ENCODE measurements at regions of chr16 and their contacts with region 1.

Region 1: DNA sequence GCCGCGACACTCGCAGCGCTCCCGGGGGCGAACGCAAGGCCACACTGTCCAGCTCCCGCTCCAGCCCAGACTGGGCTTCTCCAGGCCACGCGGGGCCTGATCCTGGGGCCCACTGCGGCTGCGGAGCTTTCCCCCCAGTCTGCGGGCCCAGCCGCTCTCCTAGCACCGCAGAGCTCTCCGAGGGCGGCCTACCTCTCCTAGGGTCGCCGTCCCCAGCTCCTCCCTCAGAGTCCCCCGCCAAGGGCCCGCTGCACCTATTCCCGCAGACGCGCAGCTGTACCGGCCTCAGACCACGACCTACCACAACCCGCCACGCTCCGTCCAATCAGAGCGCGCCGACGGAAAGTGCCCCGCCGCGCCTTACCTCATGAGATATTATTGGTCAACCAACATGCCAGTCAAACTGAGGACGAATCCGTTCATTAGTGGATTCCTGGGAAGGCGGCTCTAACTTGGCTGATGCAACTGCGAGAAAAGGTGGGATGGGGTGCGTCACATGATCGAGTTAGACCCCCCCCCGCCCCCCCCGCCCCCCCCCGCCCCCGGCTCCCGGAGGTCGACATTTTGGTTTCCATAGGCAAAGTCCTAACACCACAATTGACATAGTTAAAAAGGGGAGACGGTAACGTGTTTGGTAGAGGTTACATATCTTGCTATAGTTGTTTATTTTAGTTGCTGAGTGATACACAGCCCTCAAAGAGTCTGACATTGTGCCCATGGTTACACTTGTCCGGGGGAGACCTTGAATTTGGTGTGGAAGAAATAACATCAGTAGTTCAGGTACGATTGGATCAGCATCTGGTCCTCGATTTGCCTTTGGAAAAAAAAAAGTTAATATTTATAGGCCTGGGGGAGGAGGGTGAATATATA is at the start of gene AARS1:
- DNase-seq: peak; percentile 100
- ATAC-seq: peak; percentile 99
- H3K4me3 ChIP-seq: peak within 1 kb of the TSS; percentile 90 to 100 (median 94)
- H3K27ac ChIP-seq: peak within 1 kb of the TSS; percentile 99
- H3K4me1 ChIP-seq: peaks cover 28% of the 10 kb centered on the region
- H3K27me3 ChIP-seq: no peaks in the 10 kb centered on the region; a peak in 1 of 5 replicates
- CTCF ChIP-seq: peak; percentile 16; the same call in 1 of the 2 replicates
- EP300 ChIP-seq: peak; percentile 50 to 63; a peak in 2 of 4 replicates
- POLR2A ChIP-seq: peak; percentile 98
- RAD21 ChIP-seq: peak; percentile 79
- total RNA-seq, gene AARS1: 107 and 132 TPM in 2 replicates

Region 2: GRCh38 chr16:70151941-70152509 is 137.4 kb before region 1 on chr16:
- CTCF ChIA-PET with region 1: no interaction called
- POLR2A ChIA-PET with region 1: interaction called, 13 read pairs
- in situ Hi-C with region 1: no loop called
- intact Hi-C with region 1: no loop called
- DNase-seq: no peak
- ATAC-seq: peak; percentile 5; the same call in 1 of the 3 replicates
- H3K4me3 ChIP-seq: peak overlapping the region in 1 of 3 experiments; percentile 57; a peak in 1 of 6 replicates
- H3K27ac ChIP-seq: peak overlapping the region; percentile 84
- H3K4me1 ChIP-seq: peaks cover 37% of the 10 kb centered on the region
- H3K27me3 ChIP-seq: no peaks in the 10 kb centered on the region
- CTCF ChIP-seq: no peak
- EP300 ChIP-seq: no peak
- POLR2A ChIP-seq: no peak
- RAD21 ChIP-seq: no peak

Region 3: DNA sequence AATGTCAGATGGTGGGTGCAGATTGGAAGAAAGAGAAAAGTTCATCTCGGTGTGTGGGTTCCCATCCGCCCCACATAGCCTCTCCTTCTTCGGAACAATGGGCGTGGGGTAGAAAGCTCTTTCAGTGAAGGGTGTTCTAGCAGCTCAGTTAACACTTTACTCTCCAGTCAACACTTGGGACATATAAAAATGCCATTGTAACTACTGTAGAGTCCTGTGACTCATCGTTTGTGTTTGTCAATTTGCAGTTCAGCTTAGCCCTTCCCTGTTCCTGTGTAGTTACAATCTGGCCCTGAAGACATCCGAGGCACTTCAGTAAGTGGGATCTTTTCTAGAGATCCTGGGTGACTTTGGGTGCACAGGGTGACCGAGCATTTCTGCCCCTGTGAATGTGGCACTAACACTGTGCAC is 127.4 kb before region 1 on chr16:
- CTCF ChIA-PET with region 1: no interaction called
- POLR2A ChIA-PET with region 1: interaction called, 11 read pairs
- in situ Hi-C with region 1: no loop called
- intact Hi-C with region 1: no loop called
- DNase-seq: peak; percentile 77
- ATAC-seq: peak; percentile 1; the same call in 1 of the 3 replicates
- H3K4me3 ChIP-seq: no peak overlapping the region
- H3K27ac ChIP-seq: peak overlapping the region; percentile 24
- H3K4me1 ChIP-seq: peaks cover 61% of the 10 kb centered on the region
- H3K27me3 ChIP-seq: no peaks in the 10 kb centered on the region
- CTCF ChIP-seq: no peak
- EP300 ChIP-seq: no peak
- POLR2A ChIP-seq: peak in 1 of 2 experiments; percentile 25; a peak in 1 of 4 replicates
- RAD21 ChIP-seq: no peak

Region 4: DNA sequence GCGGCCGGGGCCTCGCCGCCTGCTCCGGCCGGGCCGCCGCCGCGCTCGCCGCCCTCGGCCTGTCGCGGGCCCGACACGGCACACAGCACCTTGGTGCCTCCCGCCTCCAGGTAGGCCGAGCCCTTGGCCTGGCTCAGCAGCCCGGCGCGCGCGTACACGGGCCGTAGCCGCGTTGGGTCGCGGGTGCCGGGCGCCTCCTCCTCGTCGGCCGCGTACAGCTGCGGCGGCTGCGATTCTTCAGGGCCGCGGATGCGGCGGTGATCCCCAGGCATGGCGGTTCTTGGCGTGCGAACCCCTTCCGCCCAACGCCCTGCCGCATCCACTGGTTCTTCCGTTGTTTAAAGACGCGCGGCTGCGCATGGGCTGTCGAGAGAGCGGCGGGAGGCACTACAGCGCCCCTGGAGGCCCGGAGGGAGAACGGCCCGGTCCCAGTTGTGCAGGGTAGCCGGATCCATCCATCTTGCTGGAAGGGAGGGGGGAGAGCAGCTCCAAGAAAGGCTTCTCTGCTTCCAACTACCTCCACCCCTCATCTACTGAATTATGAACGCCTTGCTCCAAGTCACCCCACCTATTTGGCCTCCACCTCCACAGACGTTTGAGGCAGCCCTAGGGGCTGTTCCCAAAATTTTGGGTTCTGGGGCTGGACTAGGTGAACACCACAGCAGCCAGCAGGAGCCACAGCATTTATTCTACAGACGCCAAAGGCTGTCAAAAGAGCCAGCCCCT is 37.7 kb before region 1 on chr16 and contains the start of gene EXOSC6:
- CTCF ChIA-PET with region 1: no interaction called
- POLR2A ChIA-PET with region 1: interaction called, 33 read pairs
- in situ Hi-C with region 1: no loop called
- intact Hi-C with region 1: no loop called
- DNase-seq: peak; percentile 92
- ATAC-seq: peak; percentile 88
- H3K4me3 ChIP-seq: peak within 1 kb of the TSS; percentile 69 to 83 (median 81)
- H3K27ac ChIP-seq: peak within 1 kb of the TSS; percentile 90
- H3K4me1 ChIP-seq: peaks cover 49% of the 10 kb centered on the region
- H3K27me3 ChIP-seq: no peaks in the 10 kb centered on the region
- CTCF ChIP-seq: peak; percentile 99
- EP300 ChIP-seq: peak; percentile 55 to 59
- POLR2A ChIP-seq: peak; percentile 93 to 95
- RAD21 ChIP-seq: peak; percentile 69
- total RNA-seq, gene EXOSC6: 37.3 and 39.9 TPM in 2 replicates

Region 5: DNA sequence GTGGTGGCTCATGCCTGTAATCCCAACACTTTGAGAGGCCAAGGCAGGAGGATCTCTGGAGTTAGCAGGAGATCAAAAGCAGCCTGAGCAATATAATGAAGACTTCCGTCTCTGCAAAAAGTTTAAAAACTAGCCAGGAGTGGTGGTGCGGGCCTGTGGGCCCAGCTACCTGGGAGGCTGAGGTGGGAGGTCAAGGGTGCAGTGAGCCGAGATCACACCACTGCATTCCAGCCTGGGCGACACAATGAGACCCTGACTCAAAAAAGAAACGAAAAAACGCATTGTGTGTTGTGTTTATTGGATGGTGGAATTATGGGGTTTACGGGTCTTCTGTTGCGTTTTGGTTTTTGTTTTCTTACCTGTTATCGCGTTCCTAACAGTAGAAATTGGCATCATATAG is 56.4 kb after region 1 on chr16:
- CTCF ChIA-PET with region 1: no interaction called
- POLR2A ChIA-PET with region 1: interaction called, 34 read pairs
- in situ Hi-C with region 1: no loop called
- intact Hi-C with region 1: no loop called
- DNase-seq: no peak
- ATAC-seq: no peak
- H3K4me3 ChIP-seq: peak overlapping the region; percentile 89 to 99 (median 90)
- H3K27ac ChIP-seq: peak overlapping the region; percentile 84
- H3K4me1 ChIP-seq: peaks cover 38% of the 10 kb centered on the region
- H3K27me3 ChIP-seq: no peaks in the 10 kb centered on the region; a peak in 1 of 5 replicates
- CTCF ChIP-seq: no peak
- EP300 ChIP-seq: no peak
- POLR2A ChIP-seq: 0 out of 4 replicates have a peak, but pooled peaks of 1 of the 2 experiments have one; percentile 16
- RAD21 ChIP-seq: no peak

Region 6: DNA sequence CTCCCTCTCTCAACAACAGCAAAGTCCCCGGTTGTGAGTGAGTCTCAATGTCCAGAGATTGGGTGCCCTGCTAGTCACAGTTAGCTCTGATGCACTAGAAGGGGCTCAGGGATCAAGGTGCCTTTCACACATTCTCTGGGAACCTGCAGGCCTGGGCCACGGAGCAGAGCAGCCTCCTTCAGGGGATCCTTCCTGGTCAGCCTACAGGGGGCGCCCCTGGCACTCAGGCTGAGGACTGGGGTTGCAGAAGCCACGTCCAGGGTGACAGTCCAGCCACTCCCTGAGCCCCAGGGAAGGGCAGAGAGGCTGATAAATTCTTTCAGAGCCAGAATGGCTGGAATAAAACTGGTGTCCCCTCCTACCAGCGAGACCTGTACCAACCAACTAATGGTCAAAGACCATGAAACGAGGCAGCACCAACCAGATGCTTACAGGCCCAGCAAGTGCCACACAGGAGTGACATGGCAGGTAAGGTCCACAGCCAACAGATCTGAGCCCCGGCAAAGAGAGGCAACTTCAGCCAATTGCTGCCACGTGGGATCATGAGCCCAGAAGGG is 106.0 kb after region 1 on chr16:
- CTCF ChIA-PET with region 1: no interaction called
- POLR2A ChIA-PET with region 1: no interaction called
- in situ Hi-C with region 1: no loop called
- intact Hi-C with region 1: no loop called
- DNase-seq: peak; percentile 72
- ATAC-seq: peak; percentile 95
- H3K4me3 ChIP-seq: no peak overlapping the region
- H3K27ac ChIP-seq: no peak overlapping the region
- H3K4me1 ChIP-seq: peaks cover 4% of the 10 kb centered on the region; the same call in 1 of the 2 replicates
- H3K27me3 ChIP-seq: no peaks in the 10 kb centered on the region
- CTCF ChIP-seq: peak; percentile 99
- EP300 ChIP-seq: no peak
- POLR2A ChIP-seq: no peak
- RAD21 ChIP-seq: peak; percentile 99

Measured in HepG2 (cell line).